PC-3 (cell line): ENCODE measurements at regions of chr18 and their contacts with region 1.

Region 1: GRCh38 chr18:63476666-63477065 is at the start of gene SERPINB5:
- DNase-seq: peak; percentile 96
- ATAC-seq: peak; percentile 74
- H3K4me3 ChIP-seq: peak within 1 kb of the TSS; percentile 95
- H3K27ac ChIP-seq: peak within 1 kb of the TSS; percentile 88
- H3K4me1 ChIP-seq: peaks cover 68% of the 10 kb centered on the region
- H3K27me3 ChIP-seq: no peaks in the 10 kb centered on the region
- CTCF ChIP-seq: no peak
- total RNA-seq, gene SERPINB5: 96.5 and 104 TPM in 2 replicates

Region 2: DNA sequence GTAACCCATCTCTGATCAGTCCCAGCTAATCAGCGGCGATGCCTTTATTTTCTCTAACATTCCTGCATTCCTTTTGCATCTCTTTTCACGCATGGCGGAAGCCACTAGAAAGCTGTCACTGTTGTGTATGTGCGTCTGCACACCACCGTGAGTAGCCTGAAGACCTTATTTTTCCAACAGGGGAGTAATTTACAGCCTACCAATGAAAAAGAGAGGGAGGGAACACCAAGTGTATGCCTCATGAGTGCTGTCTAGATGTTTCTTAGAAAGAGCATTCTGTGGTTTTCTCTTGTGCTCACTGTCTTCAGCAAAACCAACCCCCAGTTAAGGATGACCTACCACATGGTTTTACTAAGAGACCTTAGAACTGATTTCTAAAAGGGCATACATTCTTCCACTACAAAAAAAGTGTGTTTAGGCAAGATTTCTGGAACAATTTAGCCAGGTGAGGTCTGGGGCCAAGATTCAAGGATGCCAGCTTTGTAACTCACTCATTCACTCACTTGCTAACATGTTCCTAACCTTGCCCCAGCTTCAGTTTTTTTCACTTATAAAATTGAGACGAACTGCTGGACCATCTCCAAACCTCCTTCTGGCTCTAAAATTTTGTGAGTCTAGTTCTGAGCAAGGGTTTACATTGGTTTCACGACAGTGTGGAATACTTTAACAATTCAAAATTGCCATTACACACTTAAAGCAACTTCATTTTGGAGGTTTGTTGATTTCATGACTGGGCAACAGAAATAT is 208.5 kb before region 1 on chr18:
- CTCF ChIA-PET with region 1: no interaction called
- POLR2A ChIA-PET with region 1: no interaction called
- intact Hi-C with region 1: no loop called
- DNase-seq: no peak
- ATAC-seq: no peak
- H3K4me3 ChIP-seq: no peak overlapping the region
- H3K27ac ChIP-seq: no peak overlapping the region
- H3K4me1 ChIP-seq: no peaks in the 10 kb centered on the region
- H3K27me3 ChIP-seq: peaks cover 10% of the 10 kb centered on the region; the same call in 1 of the 2 replicates
- CTCF ChIP-seq: no peak

Region 3: DNA sequence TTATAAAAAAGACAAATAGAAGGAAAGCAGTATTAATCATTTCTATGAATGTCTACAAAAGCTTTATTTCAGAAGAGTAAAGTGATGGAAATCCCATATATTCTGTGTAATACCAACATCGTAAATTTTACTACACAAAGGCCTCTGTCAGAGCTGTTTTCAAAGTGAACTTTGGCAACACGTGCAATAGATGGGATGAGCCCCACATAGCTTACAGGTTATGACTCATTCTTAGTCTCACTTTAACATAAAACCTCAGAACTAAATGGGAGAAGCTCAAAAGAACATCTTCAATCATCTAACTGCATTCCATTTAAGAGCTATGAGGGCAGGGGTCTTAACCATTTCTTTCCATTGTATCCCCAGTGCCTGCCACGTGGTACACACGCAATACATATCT is 65.9 kb before region 1 on chr18:
- CTCF ChIA-PET with region 1: no interaction called
- POLR2A ChIA-PET with region 1: no interaction called
- intact Hi-C with region 1: loop called (anchors 5 kb)
- DNase-seq: peak; percentile 83
- ATAC-seq: peak; percentile 85
- H3K4me3 ChIP-seq: 0 out of 2 replicates have a peak overlapping the region, but pooled peaks have one; percentile 6
- H3K27ac ChIP-seq: peak overlapping the region; percentile 84
- H3K4me1 ChIP-seq: peaks cover 49% of the 10 kb centered on the region
- H3K27me3 ChIP-seq: no peaks in the 10 kb centered on the region
- CTCF ChIP-seq: no peak

Region 4: GRCh38 chr18:63454497-63454896 is 22.2 kb before region 1 on chr18:
- CTCF ChIA-PET with region 1: no interaction called
- POLR2A ChIA-PET with region 1: interaction called, 9 read pairs
- intact Hi-C with region 1: loop called (anchors 1 kb)
- DNase-seq: peak; percentile 96
- ATAC-seq: peak; percentile 91
- H3K4me3 ChIP-seq: peak overlapping the region; percentile 18; the same call in 1 of the 2 replicates
- H3K27ac ChIP-seq: peak overlapping the region; percentile 98
- H3K4me1 ChIP-seq: peaks cover 51% of the 10 kb centered on the region
- H3K27me3 ChIP-seq: no peaks in the 10 kb centered on the region
- CTCF ChIP-seq: no peak